IMR-90 (cell line): ENCODE measurements at regions of chr3 and their contacts with region 1.

Region 1: DNA sequence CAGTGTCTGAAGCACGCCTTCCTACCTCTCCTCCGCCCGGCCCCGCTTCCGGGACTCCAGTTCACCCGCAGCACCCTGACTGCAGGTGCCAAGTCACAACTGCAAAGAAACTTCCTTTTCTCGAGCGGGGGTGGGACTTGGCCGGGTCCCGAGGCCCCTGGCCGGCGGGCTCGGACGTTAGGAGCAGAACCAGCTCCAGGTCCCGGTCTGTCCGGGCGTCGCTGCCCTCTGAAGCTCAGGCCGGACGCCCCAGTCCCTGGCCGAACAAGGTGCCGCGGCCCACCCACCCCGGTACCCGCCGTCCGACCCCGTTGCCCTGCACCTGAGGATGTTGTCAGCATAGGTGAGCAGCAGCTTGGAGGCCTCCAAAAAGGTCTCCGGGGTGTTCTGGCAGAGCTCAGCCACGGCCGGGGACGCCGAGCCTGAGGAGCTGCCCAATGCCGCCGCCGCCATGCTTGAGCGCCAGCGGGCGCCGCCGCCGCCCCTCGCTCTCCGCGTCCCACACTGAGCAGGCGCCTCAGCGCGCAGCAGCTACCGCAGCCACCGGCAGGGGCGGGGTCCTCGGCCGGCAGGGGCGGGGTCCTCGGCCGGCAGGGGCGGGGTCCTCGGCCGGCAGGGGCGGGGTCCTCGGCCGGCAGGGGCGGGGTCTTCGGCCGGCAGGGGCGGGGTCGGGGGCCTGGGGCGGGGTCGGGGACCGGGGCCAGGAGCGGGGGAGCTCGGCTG is at the start of gene NGLY1:
- DNase-seq: peak; percentile 75
- ATAC-seq: peak; percentile 97
- H3K4me3 ChIP-seq: peak within 1 kb of the TSS; percentile 89
- H3K27ac ChIP-seq: peak within 1 kb of the TSS; percentile 72
- H3K4me1 ChIP-seq: peaks cover 2% of the 10 kb centered on the region; the same call in 1 of the 2 replicates
- H3K27me3 ChIP-seq: no peaks in the 10 kb centered on the region
- CTCF ChIP-seq: no peak
- POLR2A ChIP-seq: peak; percentile 90
- RAD21 ChIP-seq: no peak
- total RNA-seq, gene NGLY1: 14.9 and 24.2 TPM in 2 replicates

Region 2: GRCh38 chr3:25664810-25665314 is 118.2 kb before region 1 on chr3 and contains the start of gene TOP2B:
- CTCF ChIA-PET with region 1: no interaction called
- POLR2A ChIA-PET with region 1: no interaction called
- dilution Hi-C with region 1: no loop called
- in situ Hi-C with region 1: no loop called
- intact Hi-C with region 1: loop called (anchors 2 kb)
- DNase-seq: peak; percentile 95
- ATAC-seq: peak; percentile 93
- H3K4me3 ChIP-seq: peak within 1 kb of the TSS; percentile 80
- H3K27ac ChIP-seq: peak within 1 kb of the TSS; percentile 96
- H3K4me1 ChIP-seq: peaks cover 2% of the 10 kb centered on the region
- H3K27me3 ChIP-seq: no peaks in the 10 kb centered on the region
- CTCF ChIP-seq: no peak
- POLR2A ChIP-seq: peak; percentile 68; the same call in 1 of the 2 replicates
- RAD21 ChIP-seq: no peak
- total RNA-seq, gene TOP2B: 53.4 and 115 TPM in 2 replicates

Region 3: GRCh38 chr3:25820366-25820765 is 37.3 kb after region 1 on chr3:
- CTCF ChIA-PET with region 1: no interaction called
- POLR2A ChIA-PET with region 1: no interaction called
- dilution Hi-C with region 1: no loop called
- in situ Hi-C with region 1: no loop called
- intact Hi-C with region 1: loop called (anchors 1 kb)
- DNase-seq: peak; percentile 99
- ATAC-seq: peak; percentile 97
- H3K4me3 ChIP-seq: no peak overlapping the region
- H3K27ac ChIP-seq: no peak overlapping the region
- H3K4me1 ChIP-seq: no peaks in the 10 kb centered on the region
- H3K27me3 ChIP-seq: peaks cover 2% of the 10 kb centered on the region
- CTCF ChIP-seq: no peak
- POLR2A ChIP-seq: no peak
- RAD21 ChIP-seq: no peak

Region 4: GRCh38 chr3:25856902-25857518 is 73.9 kb after region 1 on chr3:
- CTCF ChIA-PET with region 1: interaction called, 4 read pairs
- POLR2A ChIA-PET with region 1: no interaction called
- dilution Hi-C with region 1: no loop called
- in situ Hi-C with region 1: no loop called
- intact Hi-C with region 1: loop called (anchors 2 kb)
- DNase-seq: peak; percentile 67
- ATAC-seq: peak; percentile 43; the same call in 1 of the 2 replicates
- H3K4me3 ChIP-seq: no peak overlapping the region
- H3K27ac ChIP-seq: no peak overlapping the region
- H3K4me1 ChIP-seq: peaks cover 5% of the 10 kb centered on the region
- H3K27me3 ChIP-seq: no peaks in the 10 kb centered on the region
- CTCF ChIP-seq: peak; percentile 79
- POLR2A ChIP-seq: no peak
- RAD21 ChIP-seq: peak; percentile 62